ENCODE measurements at regions of chr11 and their contacts with region 1.

Region 1: DNA sequence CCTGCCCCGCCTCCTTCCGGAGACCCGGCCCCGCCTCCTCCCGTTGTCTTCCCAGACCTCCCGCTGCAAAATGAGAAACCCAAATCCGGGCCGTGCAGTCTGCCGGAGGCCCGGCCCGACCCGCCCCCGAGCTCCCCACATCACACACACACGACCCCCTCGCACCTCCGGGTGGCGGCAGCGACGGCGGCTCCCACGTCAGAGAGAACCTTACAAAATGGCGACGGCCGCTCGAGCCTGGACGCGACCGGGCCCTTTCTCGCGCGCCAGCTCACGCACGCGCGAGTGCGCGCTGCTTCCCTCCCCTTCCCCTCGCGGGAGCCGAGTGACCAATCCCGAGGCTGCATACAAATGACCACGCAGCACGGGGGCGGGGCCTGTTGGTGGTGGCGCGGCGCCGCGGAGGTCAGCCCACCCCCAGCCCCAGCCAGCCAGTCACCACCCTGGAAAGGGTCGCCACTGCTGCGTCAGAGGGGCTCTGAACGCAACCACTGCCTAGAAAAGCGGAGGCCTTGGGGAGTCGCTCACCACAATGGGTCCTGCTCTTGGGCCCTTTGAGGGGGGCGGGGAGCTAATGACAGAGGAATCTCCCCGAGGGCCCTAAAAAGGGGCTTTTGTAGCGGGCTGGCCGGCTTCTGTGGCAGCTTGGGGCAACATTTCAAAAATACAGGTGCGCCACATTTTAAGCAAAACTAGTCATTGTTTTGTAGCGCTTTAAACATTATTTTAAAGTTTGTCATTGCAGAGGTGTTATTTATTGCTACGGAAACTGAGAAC is at the start of gene RBM4B:
- DNase-seq: peak; percentile 94
- ATAC-seq: peak; percentile 90
- H3K4me3 Mint-ChIP-seq: peak within 1 kb of the TSS; percentile 94
- H3K27ac Mint-ChIP-seq: peak within 1 kb of the TSS; percentile 99
- H3K4me1 Mint-ChIP-seq: peaks cover 31% of the 10 kb centered on the region
- H3K27me3 Mint-ChIP-seq: no peaks in the 10 kb centered on the region
- total RNA-seq, gene RBM4B: 21.1 to 23.4 TPM

Region 2: DNA sequence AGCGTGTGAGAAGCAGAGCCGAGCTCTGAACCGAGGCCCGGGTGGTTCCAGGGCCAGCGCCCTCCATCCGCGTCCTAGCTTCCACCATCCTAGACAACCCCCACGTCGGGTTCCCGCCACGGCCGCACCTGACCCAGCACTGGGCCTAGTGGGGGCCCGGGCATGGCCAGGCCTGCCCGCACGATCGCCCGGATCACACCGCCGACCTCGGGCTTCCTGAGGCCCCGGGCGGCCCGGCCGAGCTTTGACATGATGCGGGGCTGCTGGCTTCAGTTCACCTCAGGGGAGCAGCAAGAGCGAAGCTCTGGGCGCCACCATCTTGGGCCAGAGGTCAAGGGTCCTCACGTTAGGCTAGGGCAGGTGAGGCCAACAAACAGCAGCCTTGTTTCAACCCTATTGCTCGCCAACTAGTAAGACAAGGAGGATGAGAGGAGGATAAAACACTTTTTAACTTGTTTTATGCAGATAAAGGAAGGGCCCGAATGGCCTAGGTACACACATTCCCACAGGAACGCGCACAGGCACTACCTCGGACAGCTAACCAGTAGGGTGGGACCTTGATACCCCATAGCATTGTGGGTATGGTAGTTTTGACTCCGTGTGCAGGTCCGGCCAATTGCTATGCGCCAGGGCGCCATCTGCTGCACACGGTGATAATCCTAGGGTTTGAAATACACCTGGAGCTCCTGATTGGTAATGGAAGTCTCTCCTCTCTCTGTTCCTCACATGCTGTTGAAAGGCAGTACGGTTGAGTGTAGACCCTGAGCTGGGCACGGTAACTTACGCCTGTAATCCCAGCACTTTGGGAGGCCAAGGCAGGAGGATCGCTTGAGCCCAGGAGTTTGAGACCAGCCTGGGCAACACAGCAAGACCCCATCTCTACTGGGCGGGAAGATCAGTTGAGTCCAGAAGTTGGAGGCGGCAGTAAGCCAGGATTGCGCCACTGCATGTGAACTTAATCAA is 239.0 kb before region 1 on chr11 and contains the start of gene MRPL11:
- POLR2A ChIA-PET with region 1: interaction called, 15 read pairs
- DNase-seq: peak; percentile 87
- ATAC-seq: peak; percentile 95
- H3K4me3 Mint-ChIP-seq: peak within 1 kb of the TSS; percentile 90
- H3K27ac Mint-ChIP-seq: peak within 1 kb of the TSS; percentile 97
- H3K4me1 Mint-ChIP-seq: peaks cover 17% of the 10 kb centered on the region
- H3K27me3 Mint-ChIP-seq: no peaks in the 10 kb centered on the region
- total RNA-seq, gene MRPL11: 53.9 to 64.4 TPM

Region 3: DNA sequence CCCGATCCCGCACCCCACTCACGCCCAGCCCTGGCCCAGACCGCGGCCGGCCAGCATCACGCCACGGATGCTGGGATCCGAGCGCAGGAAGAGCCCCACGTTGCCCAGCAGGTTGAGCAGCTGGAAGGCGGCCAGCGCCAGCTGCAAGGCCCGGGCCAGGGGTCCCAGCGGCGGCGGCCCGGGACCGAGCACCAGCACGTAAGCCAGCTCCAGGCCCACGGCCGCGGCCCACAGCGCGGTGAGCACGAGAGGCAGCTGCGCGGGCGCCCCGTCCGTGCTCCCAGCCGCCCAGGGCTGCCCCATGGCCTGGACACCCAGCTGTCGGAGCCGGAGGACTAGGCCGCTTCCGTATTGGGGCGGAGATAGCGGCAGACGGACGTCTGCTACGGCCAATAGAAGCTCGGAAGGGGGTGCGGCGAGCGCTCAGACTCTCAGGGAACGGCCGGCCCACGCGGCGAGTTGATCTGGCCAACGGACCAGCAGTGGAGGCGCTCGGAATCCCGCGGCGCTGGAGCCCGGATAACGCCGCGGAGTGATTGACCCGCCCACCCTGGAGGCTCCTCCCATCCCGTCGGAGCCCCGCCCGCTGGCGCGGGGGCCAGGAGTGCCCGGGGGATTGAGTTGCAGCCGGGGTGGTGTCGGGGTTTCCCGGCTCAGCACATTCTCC is 132.0 kb before region 1 on chr11 and contains the start of gene ZDHHC24:
- POLR2A ChIA-PET with region 1: interaction called, 37 read pairs
- DNase-seq: peak; percentile 90
- ATAC-seq: peak; percentile 86
- H3K4me3 Mint-ChIP-seq: peak within 1 kb of the TSS; percentile 83
- H3K27ac Mint-ChIP-seq: peak within 1 kb of the TSS; percentile 65
- H3K4me1 Mint-ChIP-seq: peaks cover 25% of the 10 kb centered on the region
- H3K27me3 Mint-ChIP-seq: peaks cover 7% of the 10 kb centered on the region
- total RNA-seq, gene ZDHHC24: 22.1 to 23.0 TPM

Region 4: DNA sequence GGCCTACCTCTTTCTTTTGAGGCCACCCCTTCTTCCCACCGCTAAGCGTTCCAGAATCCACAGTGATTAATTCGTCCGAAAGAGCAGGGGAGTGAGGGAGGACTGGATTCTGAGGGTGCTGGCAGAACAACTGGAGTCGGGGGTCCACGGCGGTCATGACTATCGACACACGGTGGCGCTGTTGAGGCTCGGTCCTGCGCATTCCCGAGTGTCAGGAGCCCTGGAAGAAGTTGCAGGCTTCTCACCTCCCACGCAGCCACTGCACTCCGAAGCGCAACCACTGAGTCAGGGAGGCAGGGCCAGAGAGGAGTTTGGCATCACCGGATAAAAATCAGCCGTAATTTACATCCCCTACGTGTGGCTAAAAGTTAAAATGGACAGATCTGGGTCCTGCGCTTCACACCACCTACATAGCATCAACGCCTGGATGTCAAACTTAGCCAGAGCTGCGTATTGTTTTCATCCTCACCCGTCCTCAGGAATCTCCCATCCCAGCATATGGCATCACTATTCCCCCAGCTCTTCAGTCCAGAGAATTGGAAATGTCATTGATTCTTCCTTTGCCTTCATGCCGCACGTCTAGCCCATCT is 98.7 kb before region 1 on chr11:
- POLR2A ChIA-PET with region 1: interaction called, 24 read pairs
- DNase-seq: peak; percentile 77
- ATAC-seq: peak; percentile 56
- H3K4me3 Mint-ChIP-seq: no peak overlapping the region
- H3K27ac Mint-ChIP-seq: no peak overlapping the region
- H3K4me1 Mint-ChIP-seq: peaks cover 7% of the 10 kb centered on the region
- H3K27me3 Mint-ChIP-seq: peaks cover 8% of the 10 kb centered on the region

Region 5: DNA sequence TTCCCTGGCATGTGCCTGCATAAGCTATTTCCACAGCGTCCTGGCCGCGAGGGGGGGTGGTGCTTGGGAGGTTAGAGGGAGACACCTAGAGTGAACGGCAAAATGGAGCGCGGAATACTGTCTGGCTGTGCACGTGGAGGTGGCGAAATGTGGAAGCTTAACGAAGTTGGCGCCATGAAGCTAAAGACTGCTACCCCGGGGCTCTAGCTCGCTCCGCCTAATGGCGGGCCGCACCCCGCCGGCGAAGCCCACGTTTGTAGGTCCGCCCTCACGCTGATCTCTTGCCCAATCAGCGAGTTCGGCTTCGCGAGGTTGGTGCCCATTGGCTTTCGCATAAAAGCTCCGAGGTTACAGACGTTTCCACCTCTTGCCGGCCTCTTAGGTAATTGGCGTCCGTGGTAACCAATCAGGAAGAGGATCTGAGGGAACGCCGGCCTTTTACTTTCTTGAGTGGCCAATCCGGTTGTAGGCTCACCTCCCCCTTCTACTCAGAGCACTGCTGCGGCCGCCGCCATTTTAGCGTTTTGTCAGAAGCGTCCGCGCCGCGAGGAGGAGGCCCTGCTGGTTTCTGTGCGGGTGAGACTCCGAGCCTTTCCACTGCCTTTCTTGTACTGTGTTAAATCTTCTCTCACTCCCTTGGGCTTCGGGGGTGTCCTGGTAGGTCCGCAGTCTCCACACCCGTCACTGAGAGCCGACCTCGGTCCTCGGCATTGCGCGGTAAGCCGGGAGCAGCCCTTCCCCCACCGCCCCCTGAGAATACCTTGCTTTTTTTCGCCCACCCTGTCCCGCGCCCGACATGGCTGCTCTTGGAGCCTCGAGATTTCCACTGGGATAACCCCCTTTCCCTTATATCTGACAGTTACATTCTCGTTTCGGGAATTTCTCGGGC is 39.4 kb before region 1 on chr11 and contains the start of gene RBM4:
- POLR2A ChIA-PET with region 1: interaction called, 14 read pairs
- DNase-seq: peak; percentile 90
- ATAC-seq: peak; percentile 95
- H3K4me3 Mint-ChIP-seq: peak within 1 kb of the TSS; percentile 91
- H3K27ac Mint-ChIP-seq: peak within 1 kb of the TSS; percentile 92
- H3K4me1 Mint-ChIP-seq: peaks cover 51% of the 10 kb centered on the region
- H3K27me3 Mint-ChIP-seq: no peaks in the 10 kb centered on the region
- total RNA-seq, gene RBM4: 152 to 158 TPM

Region 6: GRCh38 chr11:66743271-66743968 is 65.6 kb after region 1 on chr11:
- POLR2A ChIA-PET with region 1: no interaction called
- DNase-seq: no peak
- ATAC-seq: no peak
- H3K4me3 Mint-ChIP-seq: peak overlapping the region; percentile 97
- H3K27ac Mint-ChIP-seq: peak overlapping the region; percentile 51
- H3K4me1 Mint-ChIP-seq: peaks cover 1% of the 10 kb centered on the region
- H3K27me3 Mint-ChIP-seq: peaks cover 2% of the 10 kb centered on the region

Region 7: DNA sequence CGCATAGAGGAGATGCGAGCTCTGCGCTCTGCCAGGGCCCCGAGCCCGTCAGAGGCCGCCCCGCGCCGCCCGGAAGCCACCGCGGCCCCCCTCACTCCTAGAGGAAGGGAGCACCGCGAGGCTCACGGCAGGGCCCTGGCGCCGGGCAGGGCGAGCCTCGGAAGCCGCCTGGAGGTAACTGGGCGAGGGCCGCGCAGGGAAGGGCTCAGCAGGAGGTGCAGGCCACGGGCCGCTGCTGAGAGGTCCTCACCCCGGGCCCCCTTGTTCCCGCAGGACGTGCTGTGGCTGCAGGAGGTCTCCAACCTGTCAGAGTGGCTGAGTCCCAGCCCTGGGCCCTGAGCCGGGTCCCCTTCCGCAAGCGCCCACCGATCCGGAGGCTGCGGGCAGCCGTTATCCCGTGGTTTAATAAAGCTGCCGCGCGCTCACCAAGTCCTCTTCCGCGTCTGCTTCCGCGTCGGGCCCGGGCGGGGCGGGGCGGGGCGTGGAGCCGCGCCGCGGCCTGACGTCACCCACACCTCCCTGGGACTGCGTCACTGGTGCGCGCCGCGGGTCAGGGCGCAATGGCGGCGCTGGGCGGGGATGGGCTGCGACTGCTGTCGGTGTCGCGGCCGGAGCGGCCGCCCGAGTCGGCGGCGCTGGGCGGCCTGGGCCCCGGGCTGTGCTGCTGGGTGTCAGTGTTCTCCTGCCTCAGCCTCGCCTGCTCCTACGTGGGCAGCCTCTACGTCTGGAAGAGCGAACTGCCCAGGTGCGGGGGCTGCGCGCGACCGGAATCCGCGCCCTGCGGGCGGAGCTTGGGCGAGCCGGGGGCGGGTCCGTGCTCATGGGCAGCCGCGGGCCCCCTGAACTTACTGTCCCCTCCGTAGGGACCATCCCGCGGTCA is 165.3 kb after region 1 on chr11 and contains the start of gene RCE1:
- POLR2A ChIA-PET with region 1: interaction called, 13 read pairs
- DNase-seq: peak; percentile 98
- ATAC-seq: peak; percentile 86
- H3K4me3 Mint-ChIP-seq: peak within 1 kb of the TSS; percentile 98
- H3K27ac Mint-ChIP-seq: peak within 1 kb of the TSS; percentile 98
- H3K4me1 Mint-ChIP-seq: peaks cover 40% of the 10 kb centered on the region
- H3K27me3 Mint-ChIP-seq: no peaks in the 10 kb centered on the region
- total RNA-seq, gene RCE1: 23.0 to 27.2 TPM

Measured in activated naive CD8-positive, alpha-beta T cell treated with anti-CD3 and anti-CD28 coated beads, Interleukin-2, amount 10 ng/mL, durations not matched to agents 7 days and 5 days (primary cell).